Endothelial cell of umbilical vein (primary cell): ENCODE measurements at regions of chr15 and their contacts with region 1.

Region 1: GRCh38 chr15:66287461-66288057 is 5.8 kb upstream of the DIS3L start:
- DNase-seq: peak; percentile 48
- H3K4me3 ChIP-seq: no peak overlapping the region
- H3K27ac ChIP-seq: no peak overlapping the region
- H3K4me1 ChIP-seq: peaks cover 1% of the 10 kb centered on the region
- H3K27me3 ChIP-seq: no peaks in the 10 kb centered on the region
- CTCF ChIP-seq: peak; percentile 24 to 35
- POLR2A ChIP-seq: no peak

Region 2: DNA sequence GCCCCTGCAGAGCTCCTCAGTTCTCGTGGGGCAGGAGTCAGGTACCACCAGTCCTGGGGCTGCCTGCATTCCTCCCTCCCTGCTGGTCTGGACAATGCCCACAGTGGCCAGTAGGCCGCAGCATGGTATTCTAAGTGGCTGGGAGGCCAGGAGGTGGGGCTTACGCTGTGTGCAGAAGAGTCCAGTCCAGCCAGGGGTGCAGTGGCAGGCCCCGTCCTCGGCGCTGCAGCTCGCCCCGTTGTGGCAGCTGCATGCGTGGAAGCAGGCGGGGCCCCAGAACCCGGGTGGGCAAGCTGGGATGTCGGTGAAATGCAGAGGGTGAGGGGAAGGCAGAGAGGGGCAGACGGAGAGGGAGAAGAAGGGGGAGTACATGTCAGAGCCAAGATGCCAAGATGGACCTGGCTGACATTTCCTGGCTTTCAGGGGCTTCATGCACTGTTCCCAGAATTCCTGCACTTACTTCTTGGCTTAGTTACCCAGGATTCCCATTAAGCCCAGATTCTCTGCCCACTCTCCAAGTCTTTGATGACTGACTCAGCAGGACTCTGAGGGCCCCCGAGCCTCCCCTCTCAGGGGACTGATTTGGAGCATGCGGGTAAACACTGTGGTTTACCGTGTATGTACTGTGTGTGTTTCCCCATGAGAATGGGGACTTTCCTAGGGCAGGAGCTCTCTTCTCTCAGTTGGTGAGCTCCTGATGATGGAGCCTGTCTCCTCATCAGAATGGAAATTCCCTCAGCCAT is 370.7 kb before region 1 on chr15:
- CTCF ChIA-PET with region 1: no interaction called
- POLR2A ChIA-PET with region 1: no interaction called
- dilution Hi-C with region 1: no loop called
- intact Hi-C with region 1: loop called (anchors 10 kb)
- DNase-seq: peak; percentile 52
- H3K4me3 ChIP-seq: no peak overlapping the region
- H3K27ac ChIP-seq: no peak overlapping the region
- H3K4me1 ChIP-seq: no peaks in the 10 kb centered on the region
- H3K27me3 ChIP-seq: no peaks in the 10 kb centered on the region
- CTCF ChIP-seq: peak; percentile 54 to 62
- POLR2A ChIP-seq: no peak

Region 3: GRCh38 chr15:65980824-65981456 is 306.6 kb before region 1 on chr15:
- CTCF ChIA-PET with region 1: interaction called, 5 read pairs
- POLR2A ChIA-PET with region 1: no interaction called
- dilution Hi-C with region 1: no loop called
- intact Hi-C with region 1: loop called (anchors 1 kb)
- DNase-seq: peak; percentile 52
- H3K4me3 ChIP-seq: no peak overlapping the region
- H3K27ac ChIP-seq: no peak overlapping the region
- H3K4me1 ChIP-seq: no peaks in the 10 kb centered on the region
- H3K27me3 ChIP-seq: peaks cover 23 to 30% of the 10 kb centered on the region in 2 experiments
- CTCF ChIP-seq: peak; percentile 58 to 68
- POLR2A ChIP-seq: no peak

Region 4: GRCh38 chr15:66202526-66202925 is 85.0 kb before region 1 on chr15:
- CTCF ChIA-PET with region 1: no interaction called
- POLR2A ChIA-PET with region 1: no interaction called
- dilution Hi-C with region 1: no loop called
- intact Hi-C with region 1: no loop called
- DNase-seq: no peak
- H3K4me3 ChIP-seq: no peak overlapping the region
- H3K27ac ChIP-seq: no peak overlapping the region
- H3K4me1 ChIP-seq: no peaks in the 10 kb centered on the region
- H3K27me3 ChIP-seq: peaks cover 3 to 14% of the 10 kb centered on the region in 2 experiments
- CTCF ChIP-seq: no peak
- POLR2A ChIP-seq: no peak

Region 5: GRCh38 chr15:66251790-66252684 is 35.5 kb before region 1 on chr15:
- CTCF ChIA-PET with region 1: interaction called, 16 read pairs
- POLR2A ChIA-PET with region 1: interaction called, 5 read pairs
- dilution Hi-C with region 1: no loop called
- intact Hi-C with region 1: loop called (anchors 1 kb)
- DNase-seq: peak; percentile 40
- H3K4me3 ChIP-seq: peak overlapping the region; percentile 15 to 42 (median 35)
- H3K27ac ChIP-seq: no peak overlapping the region
- H3K4me1 ChIP-seq: peaks cover 18% of the 10 kb centered on the region
- H3K27me3 ChIP-seq: peaks cover 68 to 76% of the 10 kb centered on the region in 2 experiments
- CTCF ChIP-seq: peak; percentile 67 to 87
- POLR2A ChIP-seq: no peak

Region 6: GRCh38 chr15:66619151-66619903 is 331.8 kb after region 1 on chr15:
- CTCF ChIA-PET with region 1: no interaction called
- POLR2A ChIA-PET with region 1: no interaction called
- dilution Hi-C with region 1: no loop called
- intact Hi-C with region 1: no loop called
- DNase-seq: peak; percentile 72
- H3K4me3 ChIP-seq: no peak overlapping the region
- H3K27ac ChIP-seq: peak overlapping the region; percentile 88
- H3K4me1 ChIP-seq: peaks cover 52% of the 10 kb centered on the region
- H3K27me3 ChIP-seq: no peaks in the 10 kb centered on the region
- CTCF ChIP-seq: peak; percentile 91 to 95
- POLR2A ChIP-seq: no peak

Region 7: GRCh38 chr15:66747886-66748707 is 460.5 kb after region 1 on chr15:
- CTCF ChIA-PET with region 1: no interaction called
- POLR2A ChIA-PET with region 1: no interaction called
- dilution Hi-C with region 1: no loop called
- intact Hi-C with region 1: no loop called
- DNase-seq: peak; percentile 75
- H3K4me3 ChIP-seq: no peak overlapping the region
- H3K27ac ChIP-seq: peak overlapping the region; percentile 37
- H3K4me1 ChIP-seq: peaks cover 62% of the 10 kb centered on the region
- H3K27me3 ChIP-seq: no peaks in the 10 kb centered on the region
- CTCF ChIP-seq: no peak
- POLR2A ChIP-seq: no peak